PC-9 (cell line): ENCODE measurements at regions of chr7 and their contacts with region 1.

Region 1: GRCh38 chr7:105589356-105590077 is 8.2 kb upstream of the EFCAB10 start:
- DNase-seq: peak; percentile 62 to 66
- H3K4me3 ChIP-seq: no peak overlapping the region
- H3K27ac ChIP-seq: no peak overlapping the region
- H3K4me1 ChIP-seq: no peaks in the 10 kb centered on the region
- H3K27me3 ChIP-seq: no peaks in the 10 kb centered on the region
- CTCF ChIP-seq: peak; percentile 78

Region 2: GRCh38 chr7:104883718-104884452 is 705.6 kb before region 1 on chr7:
- CTCF ChIA-PET with region 1: interaction called, 7 read pairs
- POLR2A ChIA-PET with region 1: no interaction called
- intact Hi-C with region 1: loop called (anchors 1 kb)
- DNase-seq: peak; percentile 42 to 77
- H3K4me3 ChIP-seq: no peak overlapping the region
- H3K27ac ChIP-seq: no peak overlapping the region
- H3K4me1 ChIP-seq: no peaks in the 10 kb centered on the region
- H3K27me3 ChIP-seq: peaks cover 16% of the 10 kb centered on the region; the same call in 1 of the 2 replicates
- CTCF ChIP-seq: peak; percentile 79

Region 3: DNA sequence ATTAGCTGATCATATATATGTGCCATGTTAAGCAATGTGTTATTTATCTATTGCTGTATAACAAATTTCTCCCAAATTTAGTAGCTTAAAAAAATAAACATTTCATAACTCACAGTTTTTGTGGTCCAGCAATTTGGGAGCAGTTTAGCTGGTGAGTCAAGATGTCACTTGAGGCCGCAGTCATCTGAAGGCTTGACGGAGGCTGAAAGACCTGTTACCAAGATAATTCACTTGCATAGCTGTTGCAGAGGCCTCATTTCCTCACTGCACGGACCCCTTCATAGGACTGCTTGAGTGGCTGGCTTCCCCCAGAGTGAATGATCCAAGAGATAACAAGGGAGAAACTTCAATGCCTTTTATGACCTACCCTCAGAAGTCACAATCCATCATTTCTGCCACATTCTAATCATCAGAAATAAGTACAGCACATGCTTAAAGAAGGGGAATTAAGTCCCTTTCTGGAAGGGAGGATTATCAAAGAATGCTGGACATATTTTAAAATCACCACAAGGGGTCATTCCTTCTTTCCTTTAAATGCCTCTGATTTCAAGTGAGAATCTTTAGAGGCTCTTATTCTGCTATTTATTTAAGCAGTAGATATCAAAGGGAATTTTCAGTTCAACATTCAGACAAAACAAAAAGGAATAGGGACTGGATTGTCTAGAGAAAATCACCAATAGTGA is 190.3 kb before region 1 on chr7:
- CTCF ChIA-PET with region 1: no interaction called
- POLR2A ChIA-PET with region 1: no interaction called
- intact Hi-C with region 1: loop called (anchors 10 kb)
- DNase-seq: no peak
- H3K4me3 ChIP-seq: no peak overlapping the region
- H3K27ac ChIP-seq: no peak overlapping the region
- H3K4me1 ChIP-seq: peaks cover 6% of the 10 kb centered on the region; the same call in 1 of the 2 replicates
- H3K27me3 ChIP-seq: no peaks in the 10 kb centered on the region
- CTCF ChIP-seq: peak; percentile 65

Region 4: GRCh38 chr7:105461518-105461917 is 128.0 kb before region 1 on chr7:
- CTCF ChIA-PET with region 1: no interaction called
- POLR2A ChIA-PET with region 1: no interaction called
- intact Hi-C with region 1: no loop called
- DNase-seq: no peak
- H3K4me3 ChIP-seq: no peak overlapping the region
- H3K27ac ChIP-seq: no peak overlapping the region
- H3K4me1 ChIP-seq: no peaks in the 10 kb centered on the region
- H3K27me3 ChIP-seq: no peaks in the 10 kb centered on the region
- CTCF ChIP-seq: no peak

Region 5: DNA sequence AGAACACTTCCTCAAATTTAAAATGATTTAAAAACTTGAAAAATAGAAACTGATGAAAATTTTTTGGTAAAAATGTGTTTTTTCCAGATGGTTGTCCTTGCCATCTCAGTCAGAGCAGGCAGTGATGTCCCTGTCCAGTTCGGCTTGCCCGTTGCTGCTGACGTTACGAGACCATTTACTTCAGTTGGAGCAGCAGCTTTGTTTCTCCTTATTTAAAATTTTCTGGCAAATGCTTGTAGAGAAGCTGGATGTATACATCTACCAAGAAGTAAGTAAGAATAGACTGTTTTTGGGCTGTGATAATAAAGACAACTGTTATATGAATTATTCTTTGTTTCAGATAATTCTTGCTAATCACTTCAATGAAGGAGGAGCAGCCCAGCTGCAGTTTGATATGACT is 24.3 kb before region 1 on chr7:
- CTCF ChIA-PET with region 1: no interaction called
- POLR2A ChIA-PET with region 1: no interaction called
- intact Hi-C with region 1: no loop called
- DNase-seq: no peak
- H3K4me3 ChIP-seq: no peak overlapping the region
- H3K27ac ChIP-seq: no peak overlapping the region
- H3K4me1 ChIP-seq: no peaks in the 10 kb centered on the region
- H3K27me3 ChIP-seq: no peaks in the 10 kb centered on the region
- CTCF ChIP-seq: no peak

Region 6: DNA sequence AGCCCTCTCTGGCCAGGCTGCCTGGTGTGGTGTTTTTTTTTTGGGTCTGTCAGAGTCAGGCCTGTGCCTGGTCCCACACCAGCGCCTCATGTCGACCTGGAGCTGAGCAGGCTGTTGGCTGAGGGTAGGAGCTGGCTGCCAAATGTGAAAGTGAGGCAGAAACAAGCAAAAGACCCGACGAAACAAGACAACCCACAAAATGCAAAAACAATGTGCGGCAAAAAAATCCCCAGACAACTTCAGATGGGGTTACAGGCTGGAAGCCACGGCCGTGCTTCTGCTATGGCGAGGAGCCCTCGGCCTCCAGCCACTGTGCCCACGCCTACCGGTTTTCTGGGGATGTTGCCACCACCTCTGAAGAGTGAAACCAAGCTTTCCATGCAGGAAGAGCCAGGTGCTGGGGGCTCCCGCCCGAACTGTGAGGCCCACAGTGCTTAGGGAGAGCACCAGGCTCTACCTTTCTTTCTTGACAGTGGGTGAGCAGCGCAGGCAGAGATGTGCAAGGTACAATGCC is 51.8 kb after region 1 on chr7:
- CTCF ChIA-PET with region 1: no interaction called
- POLR2A ChIA-PET with region 1: interaction called, 12 read pairs
- intact Hi-C with region 1: no loop called
- DNase-seq: no peak
- H3K4me3 ChIP-seq: no peak overlapping the region
- H3K27ac ChIP-seq: no peak overlapping the region
- H3K4me1 ChIP-seq: no peaks in the 10 kb centered on the region
- H3K27me3 ChIP-seq: no peaks in the 10 kb centered on the region
- CTCF ChIP-seq: no peak